ENCODE measurements at regions of chr9 and their contacts with region 1.

Region 1: DNA sequence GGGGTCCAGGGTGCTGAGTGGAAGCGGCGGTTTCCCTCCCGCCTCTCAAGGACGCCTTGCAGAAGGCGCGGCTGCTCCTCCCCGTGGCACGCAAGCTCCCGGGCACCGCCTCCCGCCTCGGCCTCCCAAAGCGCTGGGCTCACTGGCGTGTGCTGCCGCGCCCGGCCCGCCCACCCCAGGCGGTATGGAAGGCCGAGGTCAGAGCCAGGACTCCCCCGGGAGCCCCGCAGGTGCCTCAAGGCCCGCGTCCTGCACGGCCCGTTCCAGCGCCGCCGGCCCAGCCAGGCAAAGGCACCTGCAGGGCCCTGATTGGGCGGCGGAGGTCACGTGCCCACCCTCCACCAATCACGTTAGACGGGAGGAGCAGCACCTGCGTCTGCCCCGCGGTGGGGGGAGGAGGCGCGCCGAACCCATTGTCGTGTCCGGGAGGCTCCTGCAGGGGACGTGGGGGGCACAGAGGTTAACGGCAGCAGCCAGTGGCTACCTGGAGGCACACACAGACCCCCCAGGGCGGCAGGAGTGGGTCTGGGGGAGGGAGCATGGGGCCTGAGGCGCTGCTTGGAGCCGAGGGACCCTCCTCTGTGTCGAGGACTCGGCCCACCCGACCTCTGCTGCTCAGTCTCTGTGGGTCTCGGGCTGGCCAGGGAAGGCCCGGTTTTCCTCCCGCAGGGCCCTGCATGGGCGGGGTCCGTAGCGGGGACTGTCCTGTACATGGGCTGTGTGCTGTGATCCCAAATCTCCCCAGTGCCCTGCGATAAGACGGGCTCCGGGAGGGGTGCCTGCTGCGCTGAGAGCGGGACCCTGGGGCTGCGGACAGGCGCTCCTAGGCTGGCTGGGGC is 2.0 kb upstream of the LCN12 start:
- DNase-seq: peak; percentile 93 to 97 (median 95)
- H3K4me3 ChIP-seq: peak overlapping the region; percentile 29 to 57
- H3K4me3 Mint-ChIP-seq: peak overlapping the region; percentile 79 to 90 (median 86)
- H3K27ac ChIP-seq: peak overlapping the region; percentile 82
- H3K27ac Mint-ChIP-seq: peak overlapping the region; percentile 72 to 91 (median 89)
- H3K4me1 ChIP-seq: peaks cover 16% of the 10 kb centered on the region
- H3K4me1 Mint-ChIP-seq: peaks cover 3 to 16% (median 8%) of the 10 kb centered on the region in 4 donors
- H3K27me3 ChIP-seq: no peaks in the 10 kb centered on the region
- H3K27me3 Mint-ChIP-seq: no peaks in the 10 kb centered on the region

Region 2: DNA sequence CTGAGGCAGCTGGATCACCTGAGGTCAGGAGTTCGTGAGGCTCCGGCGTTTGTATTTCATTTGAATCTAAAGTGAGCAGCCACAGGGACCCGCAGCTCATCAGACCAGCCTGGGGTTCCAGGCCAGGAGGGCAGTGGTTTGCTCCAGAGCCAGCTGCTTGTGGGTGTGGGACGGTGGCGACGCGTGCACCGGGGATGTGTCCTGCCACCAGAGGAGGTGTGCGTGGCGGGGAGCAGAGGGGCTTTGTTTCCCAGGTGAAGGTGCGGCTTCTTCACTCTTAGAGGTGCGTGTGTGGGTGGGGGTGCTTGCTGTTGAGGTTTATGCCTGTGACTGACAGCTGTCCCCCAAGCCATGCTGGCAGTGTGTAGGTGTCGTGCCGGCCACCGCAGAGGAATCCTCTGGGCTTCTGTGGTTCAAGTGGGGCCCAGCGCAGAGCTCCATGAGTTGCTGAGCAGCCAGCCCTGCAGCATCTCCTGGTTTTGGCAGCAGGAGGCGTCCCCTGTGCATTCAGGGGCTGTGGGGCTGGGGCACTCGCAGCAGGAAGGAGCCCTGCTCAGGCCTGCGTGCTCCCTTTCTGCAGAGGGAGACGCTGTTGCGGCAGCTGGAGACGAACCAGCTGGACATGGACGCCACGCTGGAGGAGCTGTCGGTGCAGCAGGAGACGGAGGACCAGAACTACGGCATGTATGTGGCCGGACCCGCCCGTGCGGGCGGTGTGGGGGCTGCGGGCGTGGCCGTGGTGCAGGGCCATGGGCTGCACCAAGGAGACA is 114.7 kb before region 1 on chr9:
- CTCF ChIA-PET with region 1: no interaction called
- POLR2A ChIA-PET with region 1: no interaction called
- intact Hi-C with region 1: no loop called
- DNase-seq: no peak
- H3K4me3 ChIP-seq: no peak overlapping the region
- H3K4me3 Mint-ChIP-seq: no peak overlapping the region
- H3K27ac ChIP-seq: no peak overlapping the region
- H3K27ac Mint-ChIP-seq: no peak overlapping the region
- H3K4me1 ChIP-seq: no peaks in the 10 kb centered on the region
- H3K4me1 Mint-ChIP-seq: peaks cover 0 to 4% (median 0%) of the 10 kb centered on the region in 4 donors
- H3K27me3 ChIP-seq: no peaks in the 10 kb centered on the region
- H3K27me3 Mint-ChIP-seq: no peaks in the 10 kb centered on the region

Region 3: DNA sequence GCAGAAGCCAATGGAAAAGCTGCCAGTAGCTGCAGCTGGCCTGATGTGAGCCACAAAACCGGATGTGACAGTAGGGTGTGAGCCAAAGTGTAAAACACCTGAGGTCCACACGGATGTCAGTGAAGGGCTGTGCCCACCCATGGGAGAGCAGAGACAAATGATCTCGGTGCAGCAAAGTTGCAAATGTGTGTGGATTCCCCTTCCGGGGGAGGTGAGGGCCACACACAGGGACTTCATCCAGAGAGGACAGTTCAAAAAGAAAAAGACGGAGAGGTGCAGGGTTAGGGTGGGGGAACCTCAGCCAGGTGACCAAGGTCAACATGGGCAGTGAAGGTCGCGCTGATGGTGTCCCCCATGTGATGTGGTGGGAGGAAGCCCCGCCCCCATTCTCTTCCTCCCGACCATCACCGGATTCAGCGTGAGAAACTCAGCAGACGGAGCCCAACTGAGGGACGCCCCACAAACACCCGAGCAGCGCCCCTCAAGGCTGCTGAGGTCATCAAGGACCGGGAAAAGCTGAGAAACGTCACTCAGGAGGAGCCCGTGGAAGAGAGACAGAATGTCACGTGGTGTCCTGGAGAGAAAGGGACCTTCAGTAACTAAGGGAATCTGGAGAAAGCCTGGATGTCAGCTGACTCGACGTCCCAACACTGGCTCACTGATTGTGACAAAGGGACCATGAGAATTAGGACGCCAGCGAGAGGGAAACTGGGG is 15.9 kb after region 1 on chr9:
- CTCF ChIA-PET with region 1: interaction called, 6 read pairs
- POLR2A ChIA-PET with region 1: interaction called, 17 read pairs
- intact Hi-C with region 1: no loop called
- DNase-seq: peak; percentile 41 to 71 (median 48)
- H3K4me3 ChIP-seq: no peak overlapping the region
- H3K4me3 Mint-ChIP-seq: peak overlapping the region; percentile 70 to 86 (median 79)
- H3K27ac ChIP-seq: peak overlapping the region; percentile 42
- H3K27ac Mint-ChIP-seq: peak overlapping the region; percentile 77 to 91 (median 88)
- H3K4me1 ChIP-seq: peaks cover 47% of the 10 kb centered on the region
- H3K4me1 Mint-ChIP-seq: peaks cover 19 to 38% (median 30%) of the 10 kb centered on the region in 4 donors
- H3K27me3 ChIP-seq: no peaks in the 10 kb centered on the region
- H3K27me3 Mint-ChIP-seq: no peaks in the 10 kb centered on the region

Region 4: GRCh38 chr9:136991993-136992818 is 42.2 kb after region 1 on chr9 and contains the start of gene PAXX:
- CTCF ChIA-PET with region 1: interaction called, 13 read pairs
- POLR2A ChIA-PET with region 1: interaction called, 37 read pairs
- intact Hi-C with region 1: loop called (anchors 2 kb)
- DNase-seq: peak; percentile 92 to 93 (median 93)
- H3K4me3 ChIP-seq: peak within 1 kb of the TSS; percentile 86 to 90
- H3K4me3 Mint-ChIP-seq: peak within 1 kb of the TSS; percentile 84 to 92 (median 88)
- H3K27ac ChIP-seq: peak within 1 kb of the TSS; percentile 85
- H3K27ac Mint-ChIP-seq: peak within 1 kb of the TSS; percentile 83 to 94 (median 88)
- H3K4me1 ChIP-seq: peaks cover 41% of the 10 kb centered on the region
- H3K4me1 Mint-ChIP-seq: peaks cover 4 to 41% (median 20%) of the 10 kb centered on the region in 4 donors
- H3K27me3 ChIP-seq: no peaks in the 10 kb centered on the region
- H3K27me3 Mint-ChIP-seq: peaks cover 0 to 5% of the 10 kb centered on the region in 2 donors
- total RNA-seq, gene PAXX: 94.2 to 101 TPM

Region 5: GRCh38 chr9:137000177-137000883 is 50.3 kb after region 1 on chr9:
- CTCF ChIA-PET with region 1: interaction called, 13 read pairs
- POLR2A ChIA-PET with region 1: interaction called, 32 read pairs
- intact Hi-C with region 1: no loop called
- DNase-seq: peak in 4 of 5 donors; percentile 40 to 53 (median 44)
- H3K4me3 ChIP-seq: no peak overlapping the region
- H3K4me3 Mint-ChIP-seq: peak overlapping the region in 7 of 8 donors; percentile 26 to 81 (median 60)
- H3K27ac ChIP-seq: no peak overlapping the region
- H3K27ac Mint-ChIP-seq: peak overlapping the region; percentile 65 to 92 (median 86)
- H3K4me1 ChIP-seq: peaks cover 45% of the 10 kb centered on the region
- H3K4me1 Mint-ChIP-seq: peaks cover 13 to 50% (median 25%) of the 10 kb centered on the region in 4 donors
- H3K27me3 ChIP-seq: no peaks in the 10 kb centered on the region
- H3K27me3 Mint-ChIP-seq: no peaks in the 10 kb centered on the region

Region 6: DNA sequence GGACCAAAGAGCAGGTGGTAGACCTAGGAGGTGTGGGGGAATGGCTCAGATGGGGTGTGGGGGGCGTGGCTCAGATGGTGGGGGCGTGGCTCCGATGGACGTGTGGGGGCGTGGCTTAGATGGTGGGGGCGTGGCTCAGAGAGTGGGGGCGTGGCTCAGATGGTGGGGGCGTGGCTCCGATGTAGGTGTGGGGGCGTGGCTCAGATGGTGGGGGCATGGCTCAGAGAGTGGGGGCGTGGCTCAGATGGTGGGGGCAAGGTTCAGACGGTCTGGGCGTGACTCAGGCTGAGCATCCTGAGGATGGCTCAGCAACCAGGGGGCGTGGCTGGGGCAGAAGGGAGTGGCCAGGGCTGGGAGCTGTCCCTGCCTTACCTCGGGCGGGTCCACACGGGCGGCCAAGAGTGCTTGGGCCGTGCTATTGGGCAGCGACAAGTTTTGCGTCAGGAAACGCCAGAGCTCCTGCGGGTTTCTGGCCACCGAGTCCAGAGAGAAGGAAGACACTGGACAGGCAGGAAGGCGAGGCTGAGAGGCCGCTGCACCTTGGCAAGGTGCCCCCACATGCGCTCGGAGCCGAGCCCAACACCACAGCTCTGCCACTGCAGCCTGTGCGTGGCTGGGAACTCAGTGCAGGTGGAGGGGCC is 72.1 kb after region 1 on chr9:
- CTCF ChIA-PET with region 1: interaction called, 15 read pairs
- POLR2A ChIA-PET with region 1: interaction called, 4 read pairs
- intact Hi-C with region 1: no loop called
- DNase-seq: peak; percentile 60 to 83 (median 63)
- H3K4me3 ChIP-seq: no peak overlapping the region
- H3K4me3 Mint-ChIP-seq: peak overlapping the region in 1 of 8 donors; percentile 72
- H3K27ac ChIP-seq: peak overlapping the region; percentile 15
- H3K27ac Mint-ChIP-seq: peak overlapping the region; percentile 15 to 89 (median 79)
- H3K4me1 ChIP-seq: peaks cover 20% of the 10 kb centered on the region
- H3K4me1 Mint-ChIP-seq: peaks cover 1 to 16% (median 8%) of the 10 kb centered on the region in 4 donors
- H3K27me3 ChIP-seq: no peaks in the 10 kb centered on the region
- H3K27me3 Mint-ChIP-seq: no peaks in the 10 kb centered on the region